ENCODE measurements at regions of chr5 and their contacts with region 1.

Region 1: DNA sequence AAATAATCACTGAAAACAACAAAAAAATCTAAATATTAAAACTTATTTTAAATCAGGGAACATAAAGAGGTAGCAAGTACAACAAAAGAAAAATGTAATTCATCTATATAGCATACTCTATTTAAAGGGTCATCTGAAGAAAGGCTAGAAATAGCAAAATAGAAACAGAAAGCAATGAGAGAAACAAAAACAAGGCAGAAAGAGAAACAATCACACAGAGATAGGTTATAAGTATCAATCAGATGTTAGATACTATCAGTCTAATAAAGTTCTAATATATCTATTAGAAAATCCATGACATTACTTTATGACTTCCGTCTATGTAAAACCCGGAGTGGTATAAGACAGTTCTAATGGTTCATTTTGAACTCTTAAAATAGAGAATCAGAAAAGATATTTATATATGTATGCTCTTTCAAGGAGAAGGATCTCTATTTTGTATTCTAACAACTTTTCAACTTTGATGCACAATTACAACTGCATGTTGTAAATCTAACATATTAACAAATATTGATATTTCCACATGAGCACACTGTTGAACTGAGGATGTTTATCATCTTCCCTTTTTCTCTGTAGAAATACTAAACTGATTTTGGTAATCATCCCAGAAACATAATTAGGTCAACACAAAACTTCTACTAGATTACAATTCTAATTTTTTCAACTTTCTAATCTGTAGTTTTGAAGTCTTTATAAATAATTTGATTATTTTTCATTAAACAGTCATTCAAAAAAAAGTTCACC is 15.8 kb downstream of the RICTOR start:
- H3K4me3 Mint-ChIP-seq: peak overlapping the region; percentile 17
- H3K27ac Mint-ChIP-seq: no peak overlapping the region
- H3K4me1 Mint-ChIP-seq: peaks cover 7% of the 10 kb centered on the region
- H3K27me3 Mint-ChIP-seq: no peaks in the 10 kb centered on the region

Region 2: GRCh38 chr5:39005566-39006232 is 52.7 kb before region 1 on chr5:
- intact Hi-C with region 1: loop called (anchors 10 kb)
- H3K4me3 Mint-ChIP-seq: no peak overlapping the region
- H3K27ac Mint-ChIP-seq: no peak overlapping the region
- H3K4me1 Mint-ChIP-seq: no peaks in the 10 kb centered on the region
- H3K27me3 Mint-ChIP-seq: no peaks in the 10 kb centered on the region

Region 3: DNA sequence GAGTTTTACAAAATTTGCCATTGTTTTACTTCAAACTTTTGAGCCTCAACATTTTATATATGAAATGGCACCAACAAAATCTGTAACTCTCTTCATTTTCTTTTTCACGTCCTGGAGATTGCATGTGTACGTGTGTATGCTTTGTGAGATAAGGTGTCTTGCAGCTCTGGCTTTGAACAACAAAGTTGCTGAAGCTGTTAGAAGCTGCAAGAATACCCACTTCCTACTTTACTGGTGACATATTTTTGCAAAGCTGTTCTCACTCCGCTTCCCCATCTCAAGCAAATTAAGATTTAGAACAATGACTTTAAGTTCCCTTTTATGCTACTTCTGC is 119.2 kb after region 1 on chr5:
- intact Hi-C with region 1: no loop called
- H3K4me3 Mint-ChIP-seq: peak overlapping the region; percentile 28
- H3K27ac Mint-ChIP-seq: peak overlapping the region; percentile 73
- H3K4me1 Mint-ChIP-seq: peaks cover 70% of the 10 kb centered on the region
- H3K27me3 Mint-ChIP-seq: no peaks in the 10 kb centered on the region